CD4-positive, alpha-beta memory T cell (primary cell): ENCODE measurements at regions of chr2 and their contacts with region 1.

Region 1: GRCh38 chr2:191128172-191128910 is 22.5 kb downstream of the STAT4 start:
- DNase-seq: peak in 1 of 5 donors; percentile 37
- H3K4me3 ChIP-seq: no peak overlapping the region
- H3K4me3 Mint-ChIP-seq: peak overlapping the region in 7 of 8 donors; percentile 38 to 68 (median 59)
- H3K27ac ChIP-seq: peak overlapping the region; percentile 14
- H3K27ac Mint-ChIP-seq: peak overlapping the region; percentile 60 to 92 (median 88)
- H3K4me1 ChIP-seq: peaks cover 45% of the 10 kb centered on the region
- H3K4me1 Mint-ChIP-seq: peaks cover 45 to 71% (median 60%) of the 10 kb centered on the region in 4 donors
- H3K27me3 ChIP-seq: no peaks in the 10 kb centered on the region
- H3K27me3 Mint-ChIP-seq: no peaks in the 10 kb centered on the region

Region 2: GRCh38 chr2:189685540-189686229 is 1442.7 kb before region 1 on chr2:
- CTCF ChIA-PET with region 1: no interaction called
- POLR2A ChIA-PET with region 1: no interaction called
- intact Hi-C with region 1: no loop called
- DNase-seq: no peak
- H3K4me3 ChIP-seq: no peak overlapping the region
- H3K4me3 Mint-ChIP-seq: no peak overlapping the region
- H3K27ac ChIP-seq: no peak overlapping the region
- H3K27ac Mint-ChIP-seq: peak overlapping the region in 2 of 7 donors; percentile 68 to 70
- H3K4me1 ChIP-seq: peaks cover 14% of the 10 kb centered on the region
- H3K4me1 Mint-ChIP-seq: peaks cover 13 to 23% (median 18%) of the 10 kb centered on the region in 4 donors
- H3K27me3 ChIP-seq: no peaks in the 10 kb centered on the region
- H3K27me3 Mint-ChIP-seq: no peaks in the 10 kb centered on the region

Region 3: DNA sequence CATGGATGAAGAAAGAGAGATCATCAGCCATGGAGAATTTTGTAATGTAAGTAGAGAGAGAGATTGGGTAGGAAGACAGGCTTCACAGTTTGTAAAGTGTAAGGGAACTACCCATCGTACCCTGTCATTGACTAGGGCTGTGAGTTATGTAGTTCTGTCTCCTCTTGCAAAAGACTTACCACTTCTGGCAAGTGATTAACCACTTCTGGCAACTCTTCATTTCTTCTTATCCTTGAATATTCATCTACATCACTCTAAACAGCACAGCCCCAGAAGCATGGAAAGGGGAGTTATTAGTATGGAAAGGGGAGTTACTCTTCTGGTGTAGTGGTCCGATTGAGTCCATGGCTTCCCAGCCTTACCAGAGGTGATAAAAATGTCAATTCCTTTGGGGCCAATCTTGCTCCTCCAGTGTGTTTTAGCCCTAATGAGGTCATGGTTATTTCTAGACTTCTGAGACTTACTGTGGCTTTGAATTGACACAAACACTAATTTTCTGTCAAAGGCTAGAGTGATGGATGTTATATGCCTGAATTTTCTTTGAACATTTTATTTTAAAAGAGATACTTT is 166.3 kb before region 1 on chr2:
- CTCF ChIA-PET with region 1: no interaction called
- POLR2A ChIA-PET with region 1: no interaction called
- intact Hi-C with region 1: no loop called
- DNase-seq: no peak
- H3K4me3 ChIP-seq: no peak overlapping the region
- H3K4me3 Mint-ChIP-seq: no peak overlapping the region
- H3K27ac ChIP-seq: no peak overlapping the region
- H3K27ac Mint-ChIP-seq: peak overlapping the region in 5 of 7 donors; percentile 7 to 87 (median 42)
- H3K4me1 ChIP-seq: no peaks in the 10 kb centered on the region
- H3K4me1 Mint-ChIP-seq: peaks cover 24 to 44% (median 34%) of the 10 kb centered on the region in 4 donors
- H3K27me3 ChIP-seq: no peaks in the 10 kb centered on the region
- H3K27me3 Mint-ChIP-seq: no peaks in the 10 kb centered on the region

Region 4: GRCh38 chr2:191114403-191114886 is 13.9 kb before region 1 on chr2:
- CTCF ChIA-PET with region 1: interaction called, 6 read pairs
- POLR2A ChIA-PET with region 1: interaction called, 31 read pairs
- intact Hi-C with region 1: no loop called
- DNase-seq: peak; percentile 43 to 71 (median 57)
- H3K4me3 ChIP-seq: peak overlapping the region in 1 of 2 donors; percentile 35
- H3K4me3 Mint-ChIP-seq: peak overlapping the region; percentile 53 to 78 (median 72)
- H3K27ac ChIP-seq: peak overlapping the region; percentile 55
- H3K27ac Mint-ChIP-seq: peak overlapping the region; percentile 89 to 97 (median 93)
- H3K4me1 ChIP-seq: peaks cover 50% of the 10 kb centered on the region
- H3K4me1 Mint-ChIP-seq: peaks cover 51 to 83% (median 67%) of the 10 kb centered on the region in 4 donors
- H3K27me3 ChIP-seq: no peaks in the 10 kb centered on the region
- H3K27me3 Mint-ChIP-seq: no peaks in the 10 kb centered on the region

Region 5: GRCh38 chr2:191202881-191203397 is 74.6 kb after region 1 on chr2:
- CTCF ChIA-PET with region 1: no interaction called
- POLR2A ChIA-PET with region 1: no interaction called
- intact Hi-C with region 1: no loop called
- DNase-seq: peak in 1 of 5 donors; percentile 46
- H3K4me3 ChIP-seq: no peak overlapping the region
- H3K4me3 Mint-ChIP-seq: peak overlapping the region in 5 of 8 donors; percentile 35 to 64 (median 42)
- H3K27ac ChIP-seq: peak overlapping the region; percentile 33
- H3K27ac Mint-ChIP-seq: peak overlapping the region in 6 of 7 donors; percentile 67 to 88 (median 70)
- H3K4me1 ChIP-seq: peaks cover 44% of the 10 kb centered on the region
- H3K4me1 Mint-ChIP-seq: peaks cover 33 to 54% (median 41%) of the 10 kb centered on the region in 4 donors
- H3K27me3 ChIP-seq: no peaks in the 10 kb centered on the region
- H3K27me3 Mint-ChIP-seq: no peaks in the 10 kb centered on the region